PC-3 (cell line): ENCODE measurements at regions of chr16 and their contacts with region 1.

Region 1: DNA sequence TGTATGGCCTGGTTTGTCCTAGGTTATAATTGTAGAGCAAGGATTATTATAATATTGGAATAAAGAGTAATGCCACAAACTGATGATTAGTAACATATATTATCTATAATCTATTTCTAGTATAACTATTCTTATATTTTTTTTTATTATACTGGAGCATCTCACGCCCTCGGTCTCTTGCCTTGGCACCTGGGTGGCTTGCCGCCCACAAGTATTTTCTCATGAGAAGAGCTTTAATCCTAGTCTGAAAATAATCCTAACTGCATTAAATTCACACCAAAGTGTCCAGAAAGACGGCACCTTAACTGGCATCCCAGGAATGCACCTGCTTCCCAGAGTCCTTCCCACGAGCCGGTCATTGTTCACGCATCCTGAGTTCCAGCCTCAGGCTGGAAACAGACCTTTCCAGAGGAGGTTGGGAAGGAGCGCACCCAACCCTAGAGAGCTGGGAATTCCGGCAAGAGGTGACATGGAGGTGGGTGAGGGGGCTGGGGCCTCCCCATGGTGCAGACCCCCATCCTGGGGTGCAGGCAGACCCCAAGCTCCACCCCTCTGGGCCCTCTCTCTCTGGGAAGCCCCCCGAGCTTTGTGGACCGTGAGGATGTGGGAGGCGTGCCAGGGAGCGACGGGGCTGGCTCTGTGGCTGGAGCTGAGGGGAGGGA is 15.9 kb downstream of the CHMP1A start:
- DNase-seq: no peak
- ATAC-seq: no peak
- H3K4me3 ChIP-seq: no peak overlapping the region
- H3K27ac ChIP-seq: no peak overlapping the region
- H3K4me1 ChIP-seq: no peaks in the 10 kb centered on the region
- H3K27me3 ChIP-seq: no peaks in the 10 kb centered on the region
- CTCF ChIP-seq: no peak

Region 2: DNA sequence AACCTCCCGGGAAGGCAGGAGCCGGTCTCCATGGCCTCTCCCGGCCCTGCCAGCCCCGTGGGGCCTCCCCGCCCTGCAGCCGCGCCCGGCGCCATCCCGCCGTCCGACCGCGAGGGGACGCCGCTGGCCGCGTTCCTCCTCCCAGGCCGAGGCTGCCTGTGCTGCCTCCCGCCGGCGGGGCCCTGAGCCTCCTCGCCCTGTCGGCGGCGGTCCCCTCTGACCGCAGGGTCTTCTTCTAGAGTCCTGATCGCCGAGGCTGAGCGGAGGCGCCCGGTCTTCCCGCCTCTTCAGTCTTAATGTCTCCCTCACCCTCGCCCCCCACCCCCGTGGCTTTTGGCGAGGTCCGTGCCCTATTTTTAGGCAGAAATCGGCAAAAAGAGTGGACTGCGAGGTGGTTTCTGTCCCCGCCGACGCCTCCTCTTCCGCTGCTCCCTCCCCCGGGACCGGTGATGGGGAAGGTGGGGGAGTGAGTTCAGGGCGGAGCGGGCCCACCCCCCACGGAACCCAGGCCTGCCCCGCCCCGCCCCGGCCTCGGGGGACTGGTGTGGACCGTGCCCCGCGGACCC is 66.8 kb before region 1 on chr16:
- CTCF ChIA-PET with region 1: no interaction called
- POLR2A ChIA-PET with region 1: interaction called, 7 read pairs
- intact Hi-C with region 1: loop called (anchors 1 kb)
- DNase-seq: peak; percentile 69
- ATAC-seq: peak; percentile 83
- H3K4me3 ChIP-seq: peak overlapping the region; percentile 69
- H3K27ac ChIP-seq: no peak overlapping the region
- H3K4me1 ChIP-seq: peaks cover 6% of the 10 kb centered on the region; the same call in 1 of the 2 replicates
- H3K27me3 ChIP-seq: no peaks in the 10 kb centered on the region
- CTCF ChIP-seq: peak; percentile 62

Region 3: DNA sequence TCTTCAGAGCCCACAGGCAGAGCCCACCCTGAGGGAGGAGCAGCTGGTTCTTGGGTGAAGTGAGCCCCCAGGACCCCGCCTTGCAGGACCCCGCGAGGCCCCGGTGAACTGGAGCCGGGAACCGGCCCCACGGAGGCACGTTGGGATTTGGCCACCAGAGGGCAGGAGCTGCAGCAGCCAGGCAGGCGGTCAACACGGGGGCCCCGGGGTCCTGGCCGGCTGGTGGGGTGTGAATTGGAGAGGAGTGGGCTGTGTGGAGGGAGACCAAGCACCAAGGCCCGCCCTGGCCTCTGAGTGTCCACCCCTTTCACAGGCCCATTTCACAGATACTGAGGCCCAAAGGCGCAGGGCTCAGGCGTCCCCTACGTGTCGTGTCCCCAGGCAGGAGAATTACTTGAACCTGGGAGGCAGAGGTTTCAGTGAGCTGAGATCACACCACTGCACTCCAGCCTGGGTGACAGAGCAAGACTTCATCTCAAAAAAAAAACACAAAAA is 25.9 kb before region 1 on chr16:
- CTCF ChIA-PET with region 1: no interaction called
- POLR2A ChIA-PET with region 1: no interaction called
- intact Hi-C with region 1: loop called (anchors 1 kb)
- DNase-seq: no peak
- ATAC-seq: 0 out of 2 replicates have a peak, but pooled peaks have one; percentile 24
- H3K4me3 ChIP-seq: no peak overlapping the region
- H3K27ac ChIP-seq: no peak overlapping the region
- H3K4me1 ChIP-seq: no peaks in the 10 kb centered on the region
- H3K27me3 ChIP-seq: no peaks in the 10 kb centered on the region
- CTCF ChIP-seq: peak; percentile 68